ENCODE measurements at regions of chr22 and their contacts with region 1.

Region 1: GRCh38 chr22:50276143-50276542 is 6.0 kb upstream of the MAPK11 start:
- H3K4me3 Mint-ChIP-seq: no peak overlapping the region
- H3K27ac Mint-ChIP-seq: peak overlapping the region; percentile 1
- H3K4me1 Mint-ChIP-seq: peaks cover 25% of the 10 kb centered on the region
- H3K27me3 Mint-ChIP-seq: peaks cover 9% of the 10 kb centered on the region

Region 2: GRCh38 chr22:50306753-50307749 is 30.9 kb after region 1 on chr22 and contains the start of gene PLXNB2:
- intact Hi-C with region 1: loop called (anchors 5 kb)
- H3K4me3 Mint-ChIP-seq: peak within 1 kb of the TSS; percentile 77
- H3K27ac Mint-ChIP-seq: peak within 1 kb of the TSS; percentile 89
- H3K4me1 Mint-ChIP-seq: peaks cover 67% of the 10 kb centered on the region
- H3K27me3 Mint-ChIP-seq: no peaks in the 10 kb centered on the region

Region 3: GRCh38 chr22:50326959-50327710 is 51.0 kb after region 1 on chr22 and contains the start of gene DENND6B:
- intact Hi-C with region 1: loop called (anchors 5 kb)
- H3K4me3 Mint-ChIP-seq: peak within 1 kb of the TSS; percentile 82
- H3K27ac Mint-ChIP-seq: peak within 1 kb of the TSS; percentile 92
- H3K4me1 Mint-ChIP-seq: peaks cover 16% of the 10 kb centered on the region
- H3K27me3 Mint-ChIP-seq: peaks cover 33% of the 10 kb centered on the region

Measured in dendritic cell treated with granulocyte-macrophage colony-stimulating factor and Interleukin-4, amounts not matched to agents 40 ng/mL and 50 ng/mL, for 4 days (primary cell).